Activated naive CD4-positive, alpha-beta T cell treated with anti-CD3 and anti-CD28 coated beads for 36 hours (primary cell): ENCODE measurements at regions of chr11 and their contacts with region 1.

Region 1: GRCh38 chr11:62123669-62124185 is at the start of gene INCENP:
- DNase-seq: peak; percentile 98
- H3K4me3 Mint-ChIP-seq: peak within 1 kb of the TSS; percentile 82
- H3K27ac Mint-ChIP-seq: peak within 1 kb of the TSS; percentile 83
- H3K4me1 Mint-ChIP-seq: peaks cover 29% of the 10 kb centered on the region
- H3K27me3 Mint-ChIP-seq: no peaks in the 10 kb centered on the region
- total RNA-seq, gene INCENP: 156 to 161 TPM

Region 2: DNA sequence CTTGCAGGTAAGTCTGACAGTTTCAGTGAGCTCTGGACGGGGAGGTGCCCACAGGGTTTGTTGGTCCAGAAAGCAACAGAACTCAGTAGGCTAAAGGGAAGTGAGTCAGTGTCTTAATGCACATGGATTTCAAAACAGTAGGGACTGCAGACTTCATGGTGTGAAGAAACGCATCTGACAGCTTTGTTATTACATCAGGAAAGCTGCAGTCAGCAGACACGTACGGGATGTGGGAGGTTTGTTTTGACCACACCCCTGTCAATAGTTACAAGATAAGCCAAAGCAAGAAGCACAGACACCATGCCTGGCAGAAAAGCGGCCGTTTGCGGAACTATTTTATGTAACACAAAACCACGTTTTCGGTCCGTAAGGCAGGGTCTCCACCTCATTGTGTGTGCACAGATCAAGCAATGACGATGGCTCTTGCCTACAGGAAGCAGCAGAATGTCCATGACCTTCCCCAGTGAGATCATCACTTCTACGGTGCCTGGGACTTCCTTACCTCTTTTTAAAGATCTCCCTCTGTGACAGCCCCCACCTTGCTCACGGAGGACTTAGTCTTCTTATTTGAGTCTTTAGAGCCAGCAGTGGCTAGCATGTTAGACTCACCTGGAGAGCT is 98.1 kb before region 1 on chr11:
- CTCF ChIA-PET with region 1: no interaction called
- intact Hi-C with region 1: loop called (anchors 1 kb)
- DNase-seq: peak; percentile 86
- H3K4me3 Mint-ChIP-seq: peak overlapping the region; percentile 55
- H3K27ac Mint-ChIP-seq: peak overlapping the region; percentile 89
- H3K4me1 Mint-ChIP-seq: peaks cover 17% of the 10 kb centered on the region
- H3K27me3 Mint-ChIP-seq: no peaks in the 10 kb centered on the region

Region 3: GRCh38 chr11:62264004-62264403 is 140.3 kb after region 1 on chr11:
- CTCF ChIA-PET with region 1: no interaction called
- intact Hi-C with region 1: no loop called
- DNase-seq: no peak
- H3K4me3 Mint-ChIP-seq: no peak overlapping the region
- H3K27ac Mint-ChIP-seq: no peak overlapping the region
- H3K4me1 Mint-ChIP-seq: peaks cover 17% of the 10 kb centered on the region
- H3K27me3 Mint-ChIP-seq: peaks cover 5% of the 10 kb centered on the region